ENCODE measurements at regions of chr4 and their contacts with region 1.

Region 1: DNA sequence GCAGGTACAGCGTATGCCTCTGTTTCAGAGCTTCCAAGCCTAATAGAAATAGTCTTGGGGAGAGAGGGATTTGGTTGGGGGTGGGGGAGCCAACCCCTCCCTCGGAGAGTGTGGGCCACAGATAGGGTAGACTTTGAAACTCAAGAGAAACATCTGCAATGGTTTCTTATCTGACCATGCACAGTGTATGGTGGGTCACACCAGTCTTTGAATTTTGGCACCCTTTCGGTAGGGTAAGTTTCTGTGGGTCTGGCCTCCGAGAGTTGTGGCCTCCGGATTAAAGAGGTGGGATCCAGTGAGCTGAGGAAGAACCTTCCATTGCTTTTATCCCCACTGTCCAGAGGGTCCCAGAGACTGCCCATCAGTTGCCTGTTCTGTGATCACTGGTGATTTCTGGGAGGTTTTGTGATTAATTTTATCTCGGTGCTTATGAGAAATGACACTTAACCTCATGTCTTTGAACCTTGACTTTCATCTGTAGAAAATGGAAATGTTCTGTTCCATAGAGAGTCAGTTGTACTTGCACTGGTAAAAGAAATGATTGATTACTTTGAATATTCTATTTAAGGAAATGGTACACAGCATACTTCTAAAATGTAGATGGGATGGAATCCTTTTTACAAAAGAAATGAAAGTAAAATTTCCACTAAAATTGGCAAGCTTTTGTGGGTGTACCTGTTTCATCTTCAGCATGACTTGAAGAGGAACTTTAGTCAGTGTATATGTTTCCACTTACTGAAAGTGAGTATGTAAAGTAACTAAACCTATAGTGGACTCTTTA is 62.7 kb downstream of the TMEM131L start:
- DNase-seq: peak; percentile 30
- H3K4me3 Mint-ChIP-seq: peak overlapping the region; percentile 66
- H3K27ac Mint-ChIP-seq: peak overlapping the region; percentile 93
- H3K4me1 Mint-ChIP-seq: peaks cover 86% of the 10 kb centered on the region
- H3K27me3 Mint-ChIP-seq: no peaks in the 10 kb centered on the region

Region 2: DNA sequence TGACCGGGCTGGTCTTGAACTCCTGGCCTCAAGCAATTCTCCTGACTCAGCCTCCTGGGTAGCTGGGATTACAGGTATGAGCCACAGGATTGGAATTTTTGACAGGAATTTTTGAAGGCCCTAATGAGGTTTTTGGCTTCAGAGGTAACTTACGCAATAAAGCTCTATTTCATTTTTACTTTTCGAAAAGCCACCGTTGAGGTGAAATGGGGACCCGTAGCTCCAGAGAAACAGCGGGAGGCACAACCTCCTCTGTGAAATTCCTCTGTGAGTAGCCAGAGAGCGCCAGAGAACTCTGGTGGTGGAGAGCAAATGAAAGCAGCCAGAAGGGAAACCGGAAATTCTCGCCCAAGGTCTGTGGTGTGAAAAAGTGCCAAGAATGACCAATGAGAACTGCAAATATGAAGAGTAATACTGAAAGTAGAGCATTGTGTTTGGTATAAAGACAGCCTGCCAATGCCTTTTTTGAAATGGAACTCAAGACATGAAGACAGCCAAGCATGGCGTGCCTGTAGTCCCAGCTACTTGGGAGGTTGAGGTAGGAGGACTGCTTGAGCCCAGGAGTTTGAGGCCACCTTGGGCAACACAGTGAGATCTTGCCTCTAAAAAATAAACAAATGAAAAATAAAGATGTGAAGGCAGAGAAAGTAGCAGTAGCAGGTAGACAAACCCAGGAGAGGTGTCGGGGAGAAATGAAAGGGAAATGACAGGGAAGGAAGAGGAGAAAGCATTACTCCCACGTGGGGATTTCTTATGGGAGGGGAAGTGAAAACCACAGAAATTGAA is 95.7 kb before region 1 on chr4:
- CTCF ChIA-PET with region 1: interaction called, 7 read pairs
- POLR2A ChIA-PET with region 1: interaction called, 3 read pairs
- intact Hi-C with region 1: loop called (anchors 1 kb)
- DNase-seq: peak; percentile 88
- H3K4me3 Mint-ChIP-seq: peak overlapping the region; percentile 77
- H3K27ac Mint-ChIP-seq: peak overlapping the region; percentile 74
- H3K4me1 Mint-ChIP-seq: peaks cover 52% of the 10 kb centered on the region
- H3K27me3 Mint-ChIP-seq: no peaks in the 10 kb centered on the region

Region 3: DNA sequence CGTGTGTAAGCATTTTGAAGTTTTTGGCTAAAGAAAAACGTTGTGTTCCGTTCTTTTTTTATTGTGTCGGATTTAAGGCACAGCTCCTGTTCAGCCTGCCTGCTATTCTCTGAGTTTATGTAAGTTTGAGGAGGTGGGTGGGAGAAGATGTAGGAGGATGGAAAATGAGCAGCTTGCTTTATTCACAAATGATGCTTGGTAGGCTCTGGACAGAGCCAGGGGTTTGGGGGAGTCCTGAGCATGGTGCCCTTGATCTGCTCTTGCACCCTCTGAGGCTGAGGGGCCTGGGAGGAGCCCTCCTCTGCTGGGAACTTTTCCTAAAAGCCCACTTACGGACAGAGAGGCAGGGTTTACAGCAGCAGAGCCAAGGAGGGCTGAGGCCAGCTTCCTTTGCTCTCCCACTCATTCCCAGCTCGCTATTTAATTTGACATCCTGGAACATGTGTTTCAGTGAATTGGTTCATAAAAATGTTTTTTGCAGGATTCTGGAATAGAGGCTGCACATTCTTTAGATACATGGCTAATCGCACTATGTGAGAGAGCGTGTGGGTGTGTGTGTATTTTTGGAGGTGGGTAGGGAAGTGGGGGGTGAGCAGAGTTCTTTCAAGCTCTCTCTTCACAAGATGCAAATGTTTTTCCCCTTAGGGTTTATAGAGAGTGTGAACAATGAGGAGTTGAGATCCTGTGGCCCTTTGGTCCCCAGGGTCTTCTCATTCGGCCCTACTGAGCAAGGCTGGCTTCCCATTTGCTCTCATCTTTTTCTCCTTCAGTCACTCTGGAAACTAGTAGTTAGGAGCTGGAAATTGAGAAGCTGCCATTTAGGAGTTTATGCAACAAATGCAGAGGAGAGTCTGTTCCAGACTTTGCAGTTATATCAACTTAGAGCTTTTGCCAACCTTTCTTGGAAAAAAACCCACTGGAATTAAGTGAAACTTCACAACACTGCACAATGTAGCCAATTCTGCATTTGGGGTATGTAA is 30.6 kb before region 1 on chr4:
- CTCF ChIA-PET with region 1: interaction called, 5 read pairs
- POLR2A ChIA-PET with region 1: interaction called, 4 read pairs
- intact Hi-C with region 1: loop called (anchors 1 kb)
- DNase-seq: no peak
- H3K4me3 Mint-ChIP-seq: peak overlapping the region; percentile 67
- H3K27ac Mint-ChIP-seq: peak overlapping the region; percentile 98
- H3K4me1 Mint-ChIP-seq: peaks cover 94% of the 10 kb centered on the region
- H3K27me3 Mint-ChIP-seq: no peaks in the 10 kb centered on the region

Region 4: DNA sequence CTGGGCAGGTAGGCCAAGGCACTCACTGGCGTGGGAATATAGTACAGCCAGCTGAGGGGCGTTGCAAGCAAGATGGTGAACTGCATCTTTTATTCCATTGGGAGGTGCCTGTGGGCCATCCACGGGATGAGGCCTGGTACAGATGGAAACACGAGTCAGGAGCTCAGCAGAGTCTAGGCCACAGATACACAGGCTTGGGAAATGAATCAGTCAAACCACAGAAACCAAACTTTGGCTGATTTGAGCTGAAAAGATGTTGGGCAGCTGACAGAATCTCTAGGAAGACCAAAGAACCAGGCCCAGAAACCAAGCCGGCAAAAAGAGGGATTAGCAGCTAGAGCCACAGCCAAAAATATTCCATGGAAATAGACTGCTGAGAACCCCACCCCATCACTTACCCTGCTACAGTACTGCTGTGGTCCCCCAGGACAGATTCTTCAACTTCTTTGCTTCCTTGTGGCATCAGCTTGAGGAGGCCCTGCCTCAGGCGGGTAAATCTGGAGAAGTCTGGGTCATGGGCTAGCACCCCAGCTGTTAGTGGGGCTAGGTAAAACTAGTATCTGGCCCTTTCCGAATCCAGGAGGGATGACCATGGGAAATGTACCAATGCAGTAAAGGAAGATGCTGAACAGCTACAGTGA is 12.7 kb after region 1 on chr4:
- CTCF ChIA-PET with region 1: interaction called, 14 read pairs
- POLR2A ChIA-PET with region 1: interaction called, 14 read pairs
- intact Hi-C with region 1: loop called (anchors 1 kb)
- DNase-seq: peak; percentile 68
- H3K4me3 Mint-ChIP-seq: no peak overlapping the region
- H3K27ac Mint-ChIP-seq: peak overlapping the region; percentile 13
- H3K4me1 Mint-ChIP-seq: peaks cover 64% of the 10 kb centered on the region
- H3K27me3 Mint-ChIP-seq: no peaks in the 10 kb centered on the region

Region 5: DNA sequence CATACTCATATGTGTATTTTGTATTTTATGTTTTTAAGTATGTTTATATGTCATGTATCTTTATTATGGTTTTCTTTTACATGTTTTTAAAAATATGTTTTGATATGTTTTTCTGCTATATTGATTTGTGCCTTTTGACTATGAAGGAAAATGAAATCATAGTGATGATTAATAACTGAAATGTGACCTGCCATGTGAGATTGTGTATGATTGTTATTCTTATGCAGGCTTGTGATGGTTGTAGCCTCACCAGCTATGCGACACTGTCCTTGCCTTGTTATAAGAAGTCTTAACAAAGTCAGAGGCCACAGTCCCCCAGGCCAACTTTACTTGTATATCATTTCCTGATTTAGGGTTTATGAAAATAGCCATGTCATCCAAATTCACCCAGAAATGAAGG is 20.5 kb after region 1 on chr4:
- CTCF ChIA-PET with region 1: interaction called, 6 read pairs
- POLR2A ChIA-PET with region 1: interaction called, 5 read pairs
- intact Hi-C with region 1: loop called (anchors 2 kb)
- DNase-seq: peak; percentile 31
- H3K4me3 Mint-ChIP-seq: no peak overlapping the region
- H3K27ac Mint-ChIP-seq: peak overlapping the region; percentile 1
- H3K4me1 Mint-ChIP-seq: peaks cover 36% of the 10 kb centered on the region
- H3K27me3 Mint-ChIP-seq: no peaks in the 10 kb centered on the region

Region 6: DNA sequence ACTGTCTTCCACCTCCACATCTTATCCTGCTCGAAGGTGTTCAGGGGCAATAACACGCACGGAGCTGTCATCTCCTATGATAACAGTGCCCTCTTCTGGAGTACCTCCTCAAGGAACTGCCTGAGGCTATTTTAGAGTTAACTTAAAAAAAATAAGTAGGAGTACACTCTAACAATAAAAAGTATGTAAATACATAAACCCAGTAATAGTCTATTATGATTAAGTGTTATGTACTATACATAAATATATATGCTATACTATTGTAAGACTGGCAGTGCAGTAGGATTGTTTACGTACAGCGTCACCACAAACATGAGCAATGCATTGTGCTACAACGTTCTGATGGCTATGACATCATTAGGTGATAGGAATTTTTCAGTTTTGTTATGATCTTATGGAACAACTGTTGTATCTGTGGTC is 120.7 kb after region 1 on chr4:
- CTCF ChIA-PET with region 1: no interaction called
- POLR2A ChIA-PET with region 1: no interaction called
- intact Hi-C with region 1: loop called (anchors 5 kb)
- DNase-seq: no peak
- H3K4me3 Mint-ChIP-seq: no peak overlapping the region
- H3K27ac Mint-ChIP-seq: no peak overlapping the region
- H3K4me1 Mint-ChIP-seq: peaks cover 36% of the 10 kb centered on the region
- H3K27me3 Mint-ChIP-seq: no peaks in the 10 kb centered on the region